ENCODE measurements at regions of chr1 and their contacts with region 1.

Region 1: GRCh38 chr1:221794079-221794670 is 52.3 kb upstream of the DUSP10 start:
- DNase-seq: peak; percentile 32
- H3K4me3 Mint-ChIP-seq: peak overlapping the region; percentile 35
- H3K27ac Mint-ChIP-seq: peak overlapping the region; percentile 91
- H3K4me1 Mint-ChIP-seq: peaks cover 41% of the 10 kb centered on the region
- H3K27me3 Mint-ChIP-seq: no peaks in the 10 kb centered on the region

Region 2: DNA sequence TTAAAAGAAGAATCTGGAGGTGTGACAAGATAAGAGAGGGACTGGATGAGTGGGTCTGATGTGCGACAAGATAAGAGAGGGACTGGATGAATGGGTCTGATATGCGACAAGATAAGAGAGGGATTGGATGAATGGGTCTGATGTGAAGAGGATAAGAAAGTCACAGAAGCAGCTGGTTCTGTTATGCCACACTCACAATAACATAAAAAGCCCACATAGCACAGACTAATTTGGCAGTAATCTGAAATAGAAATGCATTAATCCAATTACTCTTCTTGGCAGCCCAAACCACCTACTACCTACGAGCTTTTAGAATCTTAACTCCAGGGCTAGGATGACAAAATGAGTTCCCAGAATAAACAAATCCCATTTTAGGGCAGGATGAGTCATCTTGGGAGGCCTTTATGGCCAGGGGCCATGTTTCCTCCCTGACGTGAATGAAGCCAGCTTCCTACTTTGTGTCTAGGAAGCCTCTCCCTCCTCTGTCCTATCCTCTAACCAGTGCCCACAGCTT is 181.9 kb before region 1 on chr1:
- intact Hi-C with region 1: no loop called
- DNase-seq: no peak
- H3K4me3 Mint-ChIP-seq: no peak overlapping the region
- H3K27ac Mint-ChIP-seq: no peak overlapping the region
- H3K4me1 Mint-ChIP-seq: no peaks in the 10 kb centered on the region
- H3K27me3 Mint-ChIP-seq: peaks cover 11% of the 10 kb centered on the region

Region 3: GRCh38 chr1:221753828-221754188 is 40.4 kb before region 1 on chr1:
- intact Hi-C with region 1: loop called (anchors 1 kb)
- DNase-seq: no peak
- H3K4me3 Mint-ChIP-seq: peak overlapping the region; percentile 59
- H3K27ac Mint-ChIP-seq: peak overlapping the region; percentile 82
- H3K4me1 Mint-ChIP-seq: peaks cover 69% of the 10 kb centered on the region
- H3K27me3 Mint-ChIP-seq: no peaks in the 10 kb centered on the region

Region 4: GRCh38 chr1:221809031-221810029 is 15.2 kb after region 1 on chr1:
- intact Hi-C with region 1: loop called (anchors 1 kb)
- DNase-seq: no peak
- H3K4me3 Mint-ChIP-seq: no peak overlapping the region
- H3K27ac Mint-ChIP-seq: no peak overlapping the region
- H3K4me1 Mint-ChIP-seq: peaks cover 38% of the 10 kb centered on the region
- H3K27me3 Mint-ChIP-seq: peaks cover 2% of the 10 kb centered on the region

Region 5: GRCh38 chr1:221839796-221840395 is 45.7 kb after region 1 on chr1:
- intact Hi-C with region 1: loop called (anchors 1 kb)
- DNase-seq: peak; percentile 26
- H3K4me3 Mint-ChIP-seq: no peak overlapping the region
- H3K27ac Mint-ChIP-seq: peak overlapping the region; percentile 64
- H3K4me1 Mint-ChIP-seq: peaks cover 57% of the 10 kb centered on the region
- H3K27me3 Mint-ChIP-seq: peaks cover 2% of the 10 kb centered on the region

Region 6: GRCh38 chr1:221994274-221994698 is 200.1 kb after region 1 on chr1:
- intact Hi-C with region 1: loop called (anchors 1 kb)
- DNase-seq: no peak
- H3K4me3 Mint-ChIP-seq: no peak overlapping the region
- H3K27ac Mint-ChIP-seq: peak overlapping the region; percentile 77
- H3K4me1 Mint-ChIP-seq: peaks cover 40% of the 10 kb centered on the region
- H3K27me3 Mint-ChIP-seq: peaks cover 2% of the 10 kb centered on the region

Region 7: GRCh38 chr1:222195857-222196256 is 401.7 kb after region 1 on chr1:
- intact Hi-C with region 1: no loop called
- DNase-seq: no peak
- H3K4me3 Mint-ChIP-seq: no peak overlapping the region
- H3K27ac Mint-ChIP-seq: no peak overlapping the region
- H3K4me1 Mint-ChIP-seq: no peaks in the 10 kb centered on the region
- H3K27me3 Mint-ChIP-seq: no peaks in the 10 kb centered on the region

Measured in activated T-helper 1 cell treated with anti-CD3 and anti-CD28 coated beads, Interleukin-12 subunit alpha, Interleukin-12 subunit beta, Interleukin-2, Interleukin-4 antibody, amounts not matched to agents 30 ng/mL and 10 ng/mL and 1 ng/mL, durations not matched to agents 14 hours and 24 hours and 36 hours (primary cell).